B cell (primary cell): ENCODE measurements at regions of chr5 and their contacts with region 1.

Region 1: DNA sequence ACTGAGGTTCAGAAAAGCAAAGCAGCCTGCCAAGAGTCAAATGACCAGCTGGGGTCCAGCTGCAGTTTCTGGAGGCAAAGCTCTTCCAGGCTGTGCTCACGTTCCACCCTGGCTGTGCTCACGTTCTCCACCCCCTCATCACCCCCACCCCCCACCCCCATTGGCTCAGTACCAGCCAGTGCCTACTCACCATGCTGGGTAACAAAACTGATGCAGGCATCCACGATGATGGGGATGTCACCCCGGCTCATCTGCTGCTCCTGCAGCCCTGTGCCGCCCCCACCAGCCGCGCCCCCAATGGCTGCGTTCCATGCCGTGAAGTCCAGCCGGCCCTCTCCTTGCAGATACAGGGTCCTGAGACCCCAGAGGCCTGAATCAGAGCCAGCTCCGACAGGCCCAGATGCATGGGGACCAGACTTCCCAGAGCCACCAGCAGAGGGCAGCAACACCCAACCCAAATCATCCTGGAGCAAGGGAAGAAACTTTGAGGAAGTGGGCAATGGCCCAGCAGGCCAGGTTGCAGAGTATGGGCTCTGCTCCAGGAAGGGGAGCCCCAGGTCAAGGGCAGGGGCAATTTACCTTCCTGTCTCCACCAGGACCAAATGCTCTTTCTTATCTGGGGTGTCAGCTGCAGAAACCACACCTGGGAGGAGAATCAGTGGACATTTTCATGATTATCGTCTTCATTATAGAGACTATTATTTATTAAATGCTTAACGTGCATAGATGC is 13.7 kb upstream of the FCHSD1 start:
- DNase-seq: peak; percentile 85
- ATAC-seq: peak; percentile 98
- H3K4me3 ChIP-seq: no peak overlapping the region
- H3K4me3 Mint-ChIP-seq: no peak overlapping the region
- H3K27ac ChIP-seq: no peak overlapping the region
- H3K27ac Mint-ChIP-seq: no peak overlapping the region
- H3K4me1 ChIP-seq: peaks cover 4 to 6% of the 10 kb centered on the region in 2 donors
- H3K4me1 Mint-ChIP-seq: peaks cover 4% of the 10 kb centered on the region
- H3K27me3 ChIP-seq: peaks cover 0 to 4% (median 0%) of the 10 kb centered on the region in 4 experiments
- H3K27me3 Mint-ChIP-seq: peaks cover 5% of the 10 kb centered on the region
- CTCF ChIP-seq: peak; percentile 91

Region 2: GRCh38 chr5:141650851-141651727 is 13.8 kb before region 1 on chr5 and contains the start of gene FCHSD1:
- CTCF ChIA-PET with region 1: interaction called, 10 read pairs
- POLR2A ChIA-PET with region 1: interaction called, 5 read pairs
- intact Hi-C with region 1: no loop called
- DNase-seq: peak; percentile 89
- ATAC-seq: peak; percentile 100
- H3K4me3 ChIP-seq: peak within 1 kb of the TSS; percentile 53 to 84 (median 70)
- H3K4me3 Mint-ChIP-seq: peak within 1 kb of the TSS; percentile 99
- H3K27ac ChIP-seq: peak within 1 kb of the TSS; percentile 60 to 82
- H3K27ac Mint-ChIP-seq: peak within 1 kb of the TSS; percentile 98
- H3K4me1 ChIP-seq: peaks cover 14 to 22% of the 10 kb centered on the region in 2 donors
- H3K4me1 Mint-ChIP-seq: peaks cover 34% of the 10 kb centered on the region
- H3K27me3 ChIP-seq: peaks cover 0 to 8% (median 0%) of the 10 kb centered on the region in 4 experiments
- H3K27me3 Mint-ChIP-seq: peaks cover 7% of the 10 kb centered on the region
- CTCF ChIP-seq: no peak
- total RNA-seq, gene FCHSD1: 114 and 123 TPM in 2 replicates

Region 3: GRCh38 chr5:141701360-141702119 is 36.6 kb after region 1 on chr5:
- CTCF ChIA-PET with region 1: interaction called, 4 read pairs
- POLR2A ChIA-PET with region 1: no interaction called
- intact Hi-C with region 1: loop called (anchors 2 kb)
- DNase-seq: no peak
- ATAC-seq: peak; percentile 23
- H3K4me3 ChIP-seq: peak overlapping the region in 4 of 5 experiments; percentile 56 to 72 (median 63)
- H3K4me3 Mint-ChIP-seq: no peak overlapping the region
- H3K27ac ChIP-seq: no peak overlapping the region
- H3K27ac Mint-ChIP-seq: no peak overlapping the region
- H3K4me1 ChIP-seq: peaks cover 22 to 36% of the 10 kb centered on the region in 2 donors
- H3K4me1 Mint-ChIP-seq: peaks cover 23% of the 10 kb centered on the region
- H3K27me3 ChIP-seq: peaks cover 0 to 72% (median 58%) of the 10 kb centered on the region in 4 experiments
- H3K27me3 Mint-ChIP-seq: peaks cover 49% of the 10 kb centered on the region
- CTCF ChIP-seq: no peak

Region 4: DNA sequence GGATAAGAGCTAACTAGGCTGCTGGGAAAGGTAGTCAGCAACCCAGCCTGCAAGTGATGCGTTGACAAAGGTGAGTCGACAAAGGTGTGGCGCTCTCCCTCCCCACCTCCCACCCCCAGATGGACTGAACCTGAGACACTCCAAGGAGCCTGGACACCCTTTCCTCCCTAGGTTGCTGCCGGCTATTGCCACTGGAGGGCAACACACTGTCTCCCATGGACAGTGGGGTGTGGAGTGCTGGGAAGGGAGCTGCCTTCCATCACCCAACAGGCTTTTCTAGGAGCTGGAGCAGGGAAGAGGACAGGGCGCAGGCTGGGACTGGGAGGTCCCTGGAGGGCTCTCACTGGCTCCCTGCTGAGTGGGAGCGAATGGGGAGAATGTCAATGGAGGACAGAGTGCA is 92.5 kb after region 1 on chr5:
- CTCF ChIA-PET with region 1: no interaction called
- POLR2A ChIA-PET with region 1: no interaction called
- intact Hi-C with region 1: no loop called
- DNase-seq: no peak
- ATAC-seq: no peak
- H3K4me3 ChIP-seq: no peak overlapping the region
- H3K4me3 Mint-ChIP-seq: no peak overlapping the region
- H3K27ac ChIP-seq: no peak overlapping the region
- H3K27ac Mint-ChIP-seq: no peak overlapping the region
- H3K4me1 ChIP-seq: no peaks in the 10 kb centered on the region
- H3K4me1 Mint-ChIP-seq: no peaks in the 10 kb centered on the region
- H3K27me3 ChIP-seq: peaks cover 0 to 89% (median 21%) of the 10 kb centered on the region in 4 experiments
- H3K27me3 Mint-ChIP-seq: peaks cover 69% of the 10 kb centered on the region
- CTCF ChIP-seq: no peak

Region 5: DNA sequence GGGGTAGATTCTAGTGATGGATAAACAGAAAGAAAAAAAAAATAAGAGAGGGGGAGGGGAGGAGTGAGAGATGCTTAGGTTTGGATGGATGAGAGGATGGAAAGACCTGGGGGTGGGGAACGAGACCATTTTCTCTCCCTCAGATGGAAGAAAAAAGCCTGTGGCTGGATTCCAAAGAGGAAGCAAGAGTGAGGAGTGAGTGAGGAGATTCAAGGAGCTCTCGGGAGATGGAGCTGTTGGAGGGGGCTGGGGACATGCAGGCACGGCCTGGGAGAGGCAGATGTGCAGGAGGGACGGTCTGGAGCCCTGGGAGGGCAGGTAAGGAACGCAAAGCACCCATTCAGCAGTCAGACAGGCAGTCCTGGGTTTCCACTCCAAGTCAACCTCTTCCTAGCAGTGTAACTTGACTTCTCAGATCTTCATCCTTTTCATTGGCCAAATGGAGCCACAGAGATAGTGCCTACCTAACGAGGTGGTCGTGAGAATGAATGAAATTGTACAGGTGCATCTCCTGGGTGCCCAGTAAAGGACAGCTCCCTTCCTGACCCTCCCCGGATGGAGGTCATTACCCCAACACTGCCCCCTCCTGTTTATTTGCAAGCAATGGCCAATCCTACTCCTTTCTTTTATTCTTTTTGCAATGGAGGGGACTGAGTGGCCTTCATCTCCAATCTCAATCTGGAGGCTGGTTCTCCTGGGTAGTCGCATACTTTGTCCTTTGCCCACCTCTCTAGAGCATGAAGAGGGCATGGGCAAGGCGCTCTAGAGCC is 161.1 kb after region 1 on chr5:
- CTCF ChIA-PET with region 1: interaction called, 10 read pairs
- POLR2A ChIA-PET with region 1: no interaction called
- intact Hi-C with region 1: no loop called
- DNase-seq: peak; percentile 19
- ATAC-seq: no peak
- H3K4me3 ChIP-seq: no peak overlapping the region
- H3K4me3 Mint-ChIP-seq: no peak overlapping the region
- H3K27ac ChIP-seq: no peak overlapping the region
- H3K27ac Mint-ChIP-seq: no peak overlapping the region
- H3K4me1 ChIP-seq: no peaks in the 10 kb centered on the region
- H3K4me1 Mint-ChIP-seq: no peaks in the 10 kb centered on the region
- H3K27me3 ChIP-seq: no peaks in the 10 kb centered on the region
- H3K27me3 Mint-ChIP-seq: peaks cover 36% of the 10 kb centered on the region
- CTCF ChIP-seq: peak; percentile 24

Region 6: DNA sequence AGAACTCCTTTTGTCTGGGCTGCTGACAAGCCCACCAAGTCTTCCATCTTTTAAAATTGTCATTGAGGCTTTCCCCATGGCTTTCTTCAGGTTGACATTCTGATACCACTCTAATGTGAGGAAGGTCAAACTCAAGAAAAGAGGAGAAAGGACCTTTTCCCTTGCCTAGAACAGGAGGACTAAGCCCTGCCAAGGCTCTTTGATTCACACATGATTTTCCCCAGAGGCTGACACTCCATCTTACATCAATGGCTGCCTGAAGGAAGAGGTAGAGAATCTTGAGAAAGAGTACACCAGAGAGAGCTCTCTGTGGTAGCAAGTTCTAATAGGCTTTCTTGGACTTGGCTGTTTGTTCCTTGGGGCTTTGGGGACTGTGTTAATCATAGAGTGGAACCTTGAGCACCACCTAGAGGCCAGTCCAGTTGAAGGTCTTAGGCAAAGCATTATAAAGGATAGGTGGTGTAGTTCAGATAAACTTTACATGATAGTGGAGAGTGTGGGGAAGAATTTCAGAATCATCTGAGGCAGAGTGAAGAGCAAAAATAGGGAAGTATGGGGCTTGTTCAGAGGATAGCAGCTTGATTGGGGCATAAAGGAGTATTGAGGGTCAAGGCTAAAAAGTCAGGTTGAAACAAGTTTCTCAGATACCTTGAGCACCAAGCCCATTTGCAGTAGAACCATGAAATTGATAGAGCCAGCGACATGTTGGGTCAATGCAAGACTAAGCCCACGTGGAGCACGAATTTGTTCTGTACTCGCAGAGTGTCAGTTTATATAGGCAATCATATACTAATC is 480.4 kb after region 1 on chr5:
- CTCF ChIA-PET with region 1: interaction called, 4 read pairs
- POLR2A ChIA-PET with region 1: no interaction called
- intact Hi-C with region 1: loop called (anchors 1 kb)
- DNase-seq: peak; percentile 59
- ATAC-seq: peak; percentile 70
- H3K4me3 ChIP-seq: no peak overlapping the region
- H3K4me3 Mint-ChIP-seq: no peak overlapping the region
- H3K27ac ChIP-seq: no peak overlapping the region
- H3K27ac Mint-ChIP-seq: no peak overlapping the region
- H3K4me1 ChIP-seq: no peaks in the 10 kb centered on the region
- H3K4me1 Mint-ChIP-seq: no peaks in the 10 kb centered on the region
- H3K27me3 ChIP-seq: no peaks in the 10 kb centered on the region
- H3K27me3 Mint-ChIP-seq: no peaks in the 10 kb centered on the region
- CTCF ChIP-seq: peak; percentile 74